ENCODE measurements at regions of chr7 and their contacts with region 1.

Region 1: GRCh38 chr7:98106647-98107445 is at the start of gene LMTK2:
- DNase-seq: peak; percentile 78 to 98
- H3K4me3 ChIP-seq: peak within 1 kb of the TSS; percentile 86 to 97
- H3K27ac ChIP-seq: peak within 1 kb of the TSS; percentile 67 to 78
- H3K4me1 ChIP-seq: peaks cover 0 to 7% of the 10 kb centered on the region in 2 donors
- H3K27me3 ChIP-seq: no peaks in the 10 kb centered on the region
- CTCF ChIP-seq: peak; percentile 77 to 92 (median 81)
- total RNA-seq, gene LMTK2: 11.8 TPM

Region 2: GRCh38 chr7:97117372-97118188 is 989.3 kb before region 1 on chr7 and contains the start of gene SDHAF3:
- intact Hi-C with region 1: loop called (anchors 10 kb)
- DNase-seq: peak; percentile 77 to 98
- H3K4me3 ChIP-seq: peak within 1 kb of the TSS; percentile 58 to 75
- H3K27ac ChIP-seq: peak within 1 kb of the TSS; percentile 65 to 74
- H3K4me1 ChIP-seq: no peaks in the 10 kb centered on the region
- H3K27me3 ChIP-seq: no peaks in the 10 kb centered on the region
- CTCF ChIP-seq: peak in 1 of 3 experiments; percentile 17
- total RNA-seq, gene SDHAF3: not detected

Region 3: DNA sequence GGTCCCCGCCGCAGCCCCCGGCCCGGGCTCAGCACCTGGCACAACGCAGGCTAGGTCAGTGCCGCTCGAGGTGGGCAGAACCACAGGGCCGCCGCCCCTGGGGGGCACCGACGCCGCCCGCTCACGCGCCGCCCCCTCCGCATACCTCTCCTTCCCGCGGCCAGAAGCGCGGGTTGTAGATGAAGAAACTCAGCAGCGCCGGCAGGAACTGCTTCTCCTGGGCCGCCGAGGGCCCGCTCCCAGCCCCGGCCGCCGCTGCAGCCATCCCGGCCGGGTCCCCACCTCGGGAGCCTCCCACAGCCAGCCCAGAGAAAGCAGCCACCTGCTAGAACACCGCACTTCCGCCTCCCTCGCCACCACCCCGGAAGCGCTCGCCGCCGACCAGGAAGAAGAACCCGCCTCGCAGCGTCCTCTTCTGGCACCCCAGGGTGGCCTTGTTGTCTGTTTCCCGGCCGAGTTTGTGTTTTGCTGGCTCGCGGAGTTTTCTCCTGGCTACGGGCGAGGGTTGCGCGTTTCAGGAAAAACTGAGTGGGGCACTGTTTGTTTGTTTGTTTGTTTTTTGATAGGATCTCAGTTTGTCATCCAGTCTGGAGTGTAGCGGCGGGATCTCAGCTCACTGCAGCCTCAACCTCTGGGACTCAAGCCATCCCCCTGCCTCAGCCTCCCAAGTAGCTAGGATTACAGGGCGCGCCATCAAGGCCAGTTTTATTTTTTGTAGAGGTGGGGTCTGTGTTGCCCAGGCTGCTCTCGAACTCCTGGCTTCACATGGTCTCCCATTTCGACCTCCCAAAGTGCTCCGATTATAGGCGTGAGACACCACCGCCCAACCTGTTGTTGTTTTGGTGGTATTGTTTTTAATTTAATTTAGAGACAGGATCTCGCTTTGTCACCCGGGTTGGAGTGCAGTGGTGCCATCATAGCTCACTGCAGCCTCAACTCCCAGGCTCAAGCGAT is 134.6 kb before region 1 on chr7:
- intact Hi-C with region 1: loop called (anchors 5 kb)
- DNase-seq: peak; percentile 12 to 86
- H3K4me3 ChIP-seq: peak overlapping the region; percentile 83 to 92
- H3K27ac ChIP-seq: peak overlapping the region; percentile 70 to 79
- H3K4me1 ChIP-seq: peaks cover 0 to 6% of the 10 kb centered on the region in 2 donors
- H3K27me3 ChIP-seq: no peaks in the 10 kb centered on the region
- CTCF ChIP-seq: peak in 1 of 3 experiments; percentile 21

Region 4: DNA sequence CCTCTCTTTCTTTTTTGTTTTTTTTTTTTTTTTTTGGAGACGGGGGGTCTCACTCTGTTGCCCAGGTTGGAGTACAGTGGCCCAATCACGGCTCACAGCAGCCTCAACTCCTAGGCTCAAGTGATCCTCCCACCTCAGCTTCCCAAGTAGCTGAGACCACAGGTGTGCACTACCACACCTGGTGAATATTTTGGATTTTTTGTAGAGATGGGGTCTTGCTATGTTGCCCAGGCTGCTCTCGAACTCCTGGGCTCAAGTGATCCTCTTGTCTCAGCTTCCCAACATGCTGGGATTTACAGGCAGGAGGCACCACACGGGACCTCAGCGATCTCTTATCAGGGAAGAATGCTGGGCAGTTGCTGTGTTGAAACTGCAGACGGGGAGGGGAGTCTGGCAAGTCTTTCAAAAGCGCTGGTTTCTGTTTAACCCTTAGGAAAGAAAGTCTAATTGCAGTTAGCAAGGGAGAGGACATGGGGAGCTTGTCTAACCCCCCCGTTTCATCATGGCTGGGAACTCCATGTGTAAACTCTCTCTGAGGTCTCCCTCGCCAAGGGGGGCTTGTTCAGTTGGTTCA is 39.8 kb before region 1 on chr7:
- intact Hi-C with region 1: no loop called
- DNase-seq: no peak
- H3K4me3 ChIP-seq: no peak overlapping the region
- H3K27ac ChIP-seq: no peak overlapping the region
- H3K4me1 ChIP-seq: no peaks in the 10 kb centered on the region
- H3K27me3 ChIP-seq: no peaks in the 10 kb centered on the region
- CTCF ChIP-seq: no peak

Region 5: GRCh38 chr7:98168181-98168905 is 61.5 kb after region 1 on chr7:
- intact Hi-C with region 1: loop called (anchors 1 kb)
- DNase-seq: no peak
- H3K4me3 ChIP-seq: no peak overlapping the region
- H3K27ac ChIP-seq: no peak overlapping the region
- H3K4me1 ChIP-seq: no peaks in the 10 kb centered on the region
- H3K27me3 ChIP-seq: no peaks in the 10 kb centered on the region
- CTCF ChIP-seq: peak; percentile 71 to 81 (median 75)

Region 6: DNA sequence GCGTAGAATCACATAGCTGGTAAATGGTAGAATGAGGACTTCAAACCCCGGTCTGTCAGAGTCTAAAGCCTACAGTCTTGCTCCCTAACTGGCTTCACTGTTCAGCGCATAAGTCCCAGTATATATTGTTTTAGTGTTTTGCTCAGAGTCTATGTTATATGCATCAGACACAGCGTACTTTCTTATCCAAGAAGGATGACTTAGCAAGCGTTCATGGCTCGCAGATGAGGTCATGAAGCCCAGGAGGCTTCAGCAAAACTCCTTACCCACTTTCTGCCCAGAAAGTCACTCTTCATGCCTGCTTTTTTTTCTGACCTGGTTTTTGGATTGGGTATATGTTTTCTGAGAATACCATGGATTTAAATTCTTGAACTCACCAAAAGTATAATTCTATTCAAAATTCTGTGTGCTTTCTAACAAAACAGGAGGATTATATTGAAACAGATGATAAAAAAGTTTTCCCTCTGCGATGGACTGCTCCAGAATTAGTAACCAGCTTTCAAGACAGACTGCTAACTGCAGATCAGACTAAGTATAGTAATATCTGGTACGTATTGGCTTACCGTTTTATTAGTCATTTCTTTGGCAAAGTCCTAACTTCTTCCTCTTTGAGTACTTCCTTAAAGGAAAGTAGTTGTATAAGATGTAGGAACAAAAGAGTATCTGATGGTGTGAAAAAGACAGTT is 79.7 kb after region 1 on chr7:
- intact Hi-C with region 1: loop called (anchors 5 kb)
- DNase-seq: no peak
- H3K4me3 ChIP-seq: peak overlapping the region; percentile 20 to 29
- H3K27ac ChIP-seq: peak overlapping the region; percentile 85 to 92
- H3K4me1 ChIP-seq: peaks cover 0 to 11% of the 10 kb centered on the region in 2 donors
- H3K27me3 ChIP-seq: no peaks in the 10 kb centered on the region
- CTCF ChIP-seq: no peak

Region 7: DNA sequence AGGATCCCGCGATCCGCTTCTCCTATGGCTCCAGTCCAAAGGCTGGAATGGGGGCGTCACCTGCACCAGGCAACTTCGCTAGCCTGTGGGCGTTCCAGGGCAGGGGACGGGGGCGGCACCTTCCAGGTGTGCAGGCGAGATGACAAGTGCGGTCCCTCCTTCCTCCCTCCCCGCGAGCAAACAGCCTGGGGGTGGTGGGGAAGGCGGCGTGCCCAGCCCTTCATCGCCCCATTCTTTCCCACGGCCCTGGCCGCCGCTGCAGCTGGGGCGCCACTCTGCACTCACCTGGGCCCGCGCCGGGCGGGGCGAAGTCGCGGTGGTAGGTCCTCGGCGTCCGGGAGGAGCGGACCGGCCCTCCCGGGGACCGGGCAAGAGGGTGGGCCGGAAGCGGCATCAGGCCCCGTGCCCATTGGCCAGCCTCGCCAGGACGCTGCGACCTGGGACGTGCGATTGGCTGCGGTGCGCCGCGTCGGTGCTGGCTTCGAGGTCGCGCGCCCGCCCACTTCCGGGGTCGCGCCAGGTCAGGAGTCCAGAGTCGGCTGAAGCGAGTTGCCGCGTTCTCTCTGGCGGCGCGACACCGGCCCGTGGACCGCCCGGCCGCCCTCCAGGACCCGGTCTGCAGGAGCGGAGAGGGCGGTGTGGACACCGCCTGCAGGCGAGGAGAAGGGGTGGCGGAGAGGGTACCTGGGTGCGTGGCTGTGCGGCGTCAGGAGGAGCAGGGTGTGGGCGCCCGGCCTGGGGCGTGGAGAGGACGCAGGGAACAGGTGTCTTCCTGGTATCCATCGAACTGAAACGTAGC is 145.2 kb after region 1 on chr7 and contains the start of gene TECPR1:
- intact Hi-C with region 1: loop called (anchors 2 kb)
- DNase-seq: peak; percentile 77 to 96
- H3K4me3 ChIP-seq: peak within 1 kb of the TSS; percentile 80 to 90
- H3K27ac ChIP-seq: peak within 1 kb of the TSS; percentile 65 to 81
- H3K4me1 ChIP-seq: peaks cover 6 to 18% of the 10 kb centered on the region in 2 donors
- H3K27me3 ChIP-seq: no peaks in the 10 kb centered on the region
- CTCF ChIP-seq: no peak
- total RNA-seq, gene TECPR1: 28.1 TPM

Measured in ascending aorta (tissue), 2 donors.